H1 (cell line): ENCODE measurements at regions of chr16 and their contacts with region 1.

Region 1: GRCh38 chr16:57906382-57907316 is 64.3 kb downstream of the CNGB1 start:
- DNase-seq: peak in 1 of 2 experiments; percentile 88
- H3K4me3 ChIP-seq: no peak overlapping the region
- H3K27ac ChIP-seq: no peak overlapping the region
- H3K4me1 ChIP-seq: peaks cover 0 to under 1% (median 0%) of the 10 kb centered on the region in 4 experiments; a peak in 1 of 7 replicates
- H3K27me3 ChIP-seq: no peaks in the 10 kb centered on the region
- CTCF ChIP-seq: peak; percentile 77 to 85 (median 80)
- EP300 ChIP-seq: no peak
- POLR2A ChIP-seq: no peak
- RAD21 ChIP-seq: peak; percentile 79 to 85

Region 2: DNA sequence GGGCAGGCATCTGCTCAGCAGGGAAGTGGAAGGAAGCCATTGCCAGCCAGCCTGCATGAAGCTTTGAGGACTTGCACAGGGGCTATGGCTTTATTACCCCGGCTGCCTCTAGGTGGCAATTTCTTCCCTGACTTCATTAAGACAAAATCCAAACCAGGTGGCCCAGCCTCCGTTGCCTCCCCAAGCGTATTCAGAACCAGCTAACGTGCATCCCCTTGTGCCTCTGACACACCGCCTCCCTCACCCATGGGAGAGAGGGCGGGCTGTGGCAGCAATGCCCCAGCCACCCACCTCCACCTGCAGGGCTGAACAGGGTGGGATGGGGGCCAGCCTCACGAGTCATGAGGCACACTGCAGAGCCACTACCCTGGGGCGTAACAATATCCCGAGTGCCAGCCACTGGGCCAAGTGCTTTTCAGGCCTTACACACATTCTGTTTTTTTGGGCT is 111.2 kb before region 1 on chr16:
- CTCF ChIA-PET with region 1: interaction called, 28 read pairs
- POLR2A ChIA-PET with region 1: no interaction called
- DNase-seq: peak in 1 of 2 experiments; percentile 72
- H3K4me3 ChIP-seq: no peak overlapping the region
- H3K27ac ChIP-seq: no peak overlapping the region
- H3K4me1 ChIP-seq: peaks cover 0 to 32% (median 17%) of the 10 kb centered on the region in 4 experiments; a peak in 6 of 7 replicates
- H3K27me3 ChIP-seq: peaks cover 0 to 17% (median 14%) of the 10 kb centered on the region in 4 experiments; a peak in 6 of 7 replicates
- CTCF ChIP-seq: peak; percentile 46 to 68 (median 63)
- EP300 ChIP-seq: no peak
- POLR2A ChIP-seq: no peak
- RAD21 ChIP-seq: peak; percentile 34 to 64; a peak in 3 of 4 replicates

Region 3: DNA sequence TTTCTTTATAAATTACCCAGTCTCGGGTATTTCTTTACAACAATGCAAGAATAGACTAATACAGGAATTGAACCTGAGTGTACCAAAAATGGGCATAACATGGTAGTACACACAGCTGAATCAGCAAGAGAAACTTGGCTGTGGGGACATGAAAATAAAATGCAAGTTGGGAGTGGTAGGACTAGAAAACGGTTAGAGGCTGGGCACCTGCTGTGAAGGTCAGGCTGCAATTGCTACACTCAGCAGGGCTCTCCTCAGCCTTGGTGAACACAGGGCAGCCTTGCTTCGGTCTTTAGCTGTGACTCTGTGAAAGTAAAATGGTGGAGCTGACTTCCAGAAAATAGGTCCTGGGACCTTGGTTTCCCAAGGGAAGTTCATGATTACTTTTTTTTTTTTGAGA is 18.7 kb after region 1 on chr16:
- CTCF ChIA-PET with region 1: interaction called, 34 read pairs
- POLR2A ChIA-PET with region 1: no interaction called
- DNase-seq: no peak
- H3K4me3 ChIP-seq: no peak overlapping the region
- H3K27ac ChIP-seq: no peak overlapping the region
- H3K4me1 ChIP-seq: peaks cover 0 to 2% (median 0%) of the 10 kb centered on the region in 4 experiments; a peak in 1 of 7 replicates
- H3K27me3 ChIP-seq: no peaks in the 10 kb centered on the region; a peak in 1 of 7 replicates
- CTCF ChIP-seq: no peak
- EP300 ChIP-seq: no peak
- POLR2A ChIP-seq: no peak
- RAD21 ChIP-seq: no peak

Region 4: GRCh38 chr16:57945740-57946138 is 39.1 kb after region 1 on chr16:
- CTCF ChIA-PET with region 1: interaction called, 28 read pairs
- POLR2A ChIA-PET with region 1: interaction called, 3 read pairs
- DNase-seq: no peak
- H3K4me3 ChIP-seq: no peak overlapping the region
- H3K27ac ChIP-seq: no peak overlapping the region
- H3K4me1 ChIP-seq: no peaks in the 10 kb centered on the region; a peak in 1 of 7 replicates
- H3K27me3 ChIP-seq: no peaks in the 10 kb centered on the region
- CTCF ChIP-seq: peak; percentile 48 to 56 (median 48); a peak in 3 of 4 replicates
- EP300 ChIP-seq: no peak
- POLR2A ChIP-seq: no peak
- RAD21 ChIP-seq: peak; percentile 17 to 39; a peak in 2 of 4 replicates

Region 5: DNA sequence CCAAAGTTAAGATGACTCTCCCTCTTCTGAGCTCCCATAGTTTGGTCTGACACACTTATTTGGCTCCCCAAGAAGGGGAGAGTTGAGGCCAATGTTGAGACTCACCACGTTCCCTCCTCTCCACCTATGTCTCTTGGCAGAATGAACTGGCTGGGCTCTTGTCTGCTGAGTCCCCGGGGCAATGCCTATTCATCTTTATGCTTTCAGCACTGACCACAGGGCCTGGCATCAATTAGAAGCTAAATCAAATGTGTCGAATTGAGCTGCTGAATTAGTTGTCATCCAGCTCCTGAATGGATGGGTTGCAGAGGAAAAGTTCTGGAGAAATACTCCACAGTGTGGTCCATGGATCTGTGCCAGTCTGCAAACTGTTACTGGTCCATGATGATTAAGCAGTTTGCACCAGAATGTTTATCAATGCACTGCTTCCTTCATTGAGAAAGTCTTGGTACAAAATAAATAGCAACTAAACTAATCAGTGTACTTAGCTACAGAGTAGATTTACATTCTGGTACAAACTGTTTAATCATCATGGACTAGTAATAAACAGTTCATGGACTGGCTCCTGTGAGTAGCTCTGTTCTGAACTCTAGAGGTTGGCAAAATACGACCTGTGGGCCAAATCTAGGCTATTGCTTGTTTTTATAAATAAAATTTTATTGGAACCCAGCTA is 59.6 kb after region 1 on chr16:
- CTCF ChIA-PET with region 1: interaction called, 40 read pairs
- POLR2A ChIA-PET with region 1: interaction called, 3 read pairs
- DNase-seq: no peak
- H3K4me3 ChIP-seq: no peak overlapping the region
- H3K27ac ChIP-seq: no peak overlapping the region
- H3K4me1 ChIP-seq: no peaks in the 10 kb centered on the region
- H3K27me3 ChIP-seq: no peaks in the 10 kb centered on the region
- CTCF ChIP-seq: no peak
- EP300 ChIP-seq: no peak
- POLR2A ChIP-seq: no peak
- RAD21 ChIP-seq: no peak